Activated CD4-positive, alpha-beta memory T cell treated with anti-CD3 and anti-CD28 coated beads for 36 hours (primary cell): ENCODE measurements at regions of chr3 and their contacts with region 1.

Region 1: DNA sequence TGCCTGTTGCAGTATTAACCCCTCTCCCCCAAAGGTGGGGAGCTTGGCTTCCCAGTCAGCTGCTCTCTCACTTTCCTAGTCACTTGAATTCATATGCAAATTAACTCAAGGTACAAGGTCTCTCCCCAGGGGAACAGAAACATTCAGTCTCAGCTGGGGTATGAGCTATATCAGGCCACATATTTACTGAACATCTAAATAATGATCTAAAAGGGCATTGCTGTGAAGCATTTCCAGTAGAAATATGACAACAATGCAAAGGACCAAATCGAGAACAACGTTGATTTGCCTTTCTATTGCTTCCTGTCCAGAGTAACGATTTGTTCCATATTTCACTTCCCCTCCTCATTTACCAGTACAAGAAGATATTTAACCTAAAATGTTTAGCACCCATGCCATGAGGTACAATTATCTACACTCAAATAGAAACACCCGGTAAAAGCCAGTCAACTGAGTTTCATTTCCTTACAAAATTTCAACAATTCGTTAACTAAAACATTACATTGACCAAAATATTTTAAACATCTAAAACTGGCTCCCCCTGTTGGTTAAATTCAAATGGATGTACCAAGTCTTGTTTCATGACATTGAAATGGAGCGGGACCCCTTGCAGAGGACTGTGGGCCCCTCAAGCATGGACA is 36.5 kb upstream of the KLHL6 start:
- DNase-seq: no peak
- H3K4me3 Mint-ChIP-seq: peak overlapping the region; percentile 59
- H3K27ac Mint-ChIP-seq: peak overlapping the region; percentile 69
- H3K4me1 Mint-ChIP-seq: peaks cover 32% of the 10 kb centered on the region
- H3K27me3 Mint-ChIP-seq: no peaks in the 10 kb centered on the region

Region 2: GRCh38 chr3:183481582-183481981 is 110.4 kb before region 1 on chr3:
- CTCF ChIA-PET with region 1: interaction called, 10 read pairs
- POLR2A ChIA-PET with region 1: no interaction called
- intact Hi-C with region 1: loop called (anchors 1 kb)
- DNase-seq: peak; percentile 49
- H3K4me3 Mint-ChIP-seq: no peak overlapping the region
- H3K27ac Mint-ChIP-seq: no peak overlapping the region
- H3K4me1 Mint-ChIP-seq: peaks cover 6% of the 10 kb centered on the region
- H3K27me3 Mint-ChIP-seq: no peaks in the 10 kb centered on the region

Region 3: DNA sequence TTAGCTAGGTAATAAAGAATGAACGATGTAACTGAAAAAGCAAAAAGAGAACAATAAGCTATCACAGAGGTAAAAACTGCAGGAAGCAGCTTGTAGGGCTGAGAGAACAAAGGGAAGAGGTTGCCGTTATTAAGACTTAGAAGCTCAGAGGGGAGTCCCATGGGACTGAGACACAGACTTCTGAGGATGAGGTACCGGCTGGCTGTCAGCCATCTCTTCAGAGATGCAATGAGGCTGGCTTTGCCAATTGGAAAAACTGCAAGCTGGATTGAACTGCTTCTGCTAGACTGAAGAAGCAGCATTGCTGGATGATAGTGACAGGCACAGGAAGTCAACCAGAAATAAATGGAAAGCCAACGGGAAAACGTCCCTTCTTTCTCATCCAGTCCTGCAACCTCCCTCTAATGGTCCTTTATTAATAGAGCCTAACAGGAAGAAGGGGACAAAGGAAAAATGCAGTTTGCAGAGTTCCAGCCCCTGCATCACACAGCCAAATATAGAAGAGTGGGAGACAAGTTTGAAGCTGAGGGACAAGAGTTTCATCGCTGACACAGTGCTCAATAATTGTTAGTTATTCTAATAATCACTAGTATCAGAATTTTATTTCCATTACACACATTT is 15.4 kb before region 1 on chr3:
- CTCF ChIA-PET with region 1: interaction called, 14 read pairs
- POLR2A ChIA-PET with region 1: no interaction called
- intact Hi-C with region 1: no loop called
- DNase-seq: no peak
- H3K4me3 Mint-ChIP-seq: no peak overlapping the region
- H3K27ac Mint-ChIP-seq: no peak overlapping the region
- H3K4me1 Mint-ChIP-seq: peaks cover 14% of the 10 kb centered on the region
- H3K27me3 Mint-ChIP-seq: no peaks in the 10 kb centered on the region